ENCODE measurements at regions of chr18 and their contacts with region 1.

Region 1: GRCh38 chr18:34661464-34662111 is 48.5 kb upstream of the DTNA start:
- DNase-seq: no peak
- ATAC-seq: peak; percentile 71
- H3K4me3 ChIP-seq: no peak overlapping the region
- H3K27ac ChIP-seq: no peak overlapping the region
- H3K4me1 ChIP-seq: peaks cover 3 to 6% of the 10 kb centered on the region in 2 donors
- H3K27me3 ChIP-seq: no peaks in the 10 kb centered on the region

Region 2: DNA sequence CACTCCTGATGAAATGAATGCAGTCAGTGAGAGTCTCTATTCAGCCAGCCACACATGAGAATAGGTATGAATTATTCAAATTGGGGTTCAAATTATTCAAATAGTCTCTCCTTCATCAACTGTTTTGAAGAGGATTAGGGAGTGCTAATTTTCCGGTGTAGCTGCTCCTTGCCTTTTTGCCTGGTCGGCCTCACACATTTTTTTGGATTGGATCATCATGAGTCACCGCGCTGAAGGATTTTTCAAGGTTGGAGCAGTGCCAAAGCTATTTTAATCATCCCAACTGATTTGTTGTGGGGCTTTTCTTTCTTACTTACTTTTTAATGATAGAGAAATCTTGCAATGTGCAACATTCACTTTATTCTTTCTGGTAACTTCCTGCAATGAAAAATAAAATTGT is 46.1 kb after region 1 on chr18:
- intact Hi-C with region 1: loop called (anchors 5 kb)
- DNase-seq: no peak
- ATAC-seq: peak; percentile 76
- H3K4me3 ChIP-seq: peak overlapping the region in 1 of 2 donors; percentile 59
- H3K27ac ChIP-seq: no peak overlapping the region
- H3K4me1 ChIP-seq: peaks cover 3 to 9% of the 10 kb centered on the region in 2 donors
- H3K27me3 ChIP-seq: no peaks in the 10 kb centered on the region

Region 3: DNA sequence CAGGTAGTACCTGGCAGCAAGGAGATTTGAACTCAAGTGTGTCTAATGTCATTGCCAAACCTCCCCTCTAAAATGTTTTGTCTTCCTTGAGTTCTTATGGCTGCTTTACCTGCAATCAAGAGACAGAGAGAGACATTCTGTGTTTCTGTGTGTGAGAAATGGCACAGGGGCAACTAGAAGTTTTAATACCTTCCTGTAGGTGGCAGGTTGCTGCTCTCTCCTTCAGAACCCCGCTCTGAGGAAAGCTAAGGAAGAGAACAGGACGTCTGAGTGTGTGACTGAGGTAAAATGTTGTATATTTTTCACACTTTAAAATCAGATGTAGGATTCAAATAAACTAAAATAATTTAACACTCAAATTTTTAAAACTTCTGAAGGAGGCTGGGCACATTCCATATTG is 67.7 kb after region 1 on chr18:
- intact Hi-C with region 1: no loop called
- DNase-seq: no peak
- ATAC-seq: peak; percentile 64
- H3K4me3 ChIP-seq: no peak overlapping the region
- H3K27ac ChIP-seq: peak overlapping the region in 1 of 2 donors; percentile 10
- H3K4me1 ChIP-seq: peaks cover 8 to 16% of the 10 kb centered on the region in 2 donors
- H3K27me3 ChIP-seq: no peaks in the 10 kb centered on the region

Measured in aorta (tissue), 5 donors.